ENCODE measurements at regions of chr1 and their contacts with region 1.

Region 1: GRCh38 chr1:83764209-83764608 is 234.7 kb downstream of the TTLL7 start:
- H3K4me3 ChIP-seq: no peak overlapping the region
- H3K27ac ChIP-seq: no peak overlapping the region
- H3K4me1 ChIP-seq: peaks cover 15% of the 10 kb centered on the region; the same call in 1 of the 2 replicates
- CTCF ChIP-seq: no peak

Region 2: DNA sequence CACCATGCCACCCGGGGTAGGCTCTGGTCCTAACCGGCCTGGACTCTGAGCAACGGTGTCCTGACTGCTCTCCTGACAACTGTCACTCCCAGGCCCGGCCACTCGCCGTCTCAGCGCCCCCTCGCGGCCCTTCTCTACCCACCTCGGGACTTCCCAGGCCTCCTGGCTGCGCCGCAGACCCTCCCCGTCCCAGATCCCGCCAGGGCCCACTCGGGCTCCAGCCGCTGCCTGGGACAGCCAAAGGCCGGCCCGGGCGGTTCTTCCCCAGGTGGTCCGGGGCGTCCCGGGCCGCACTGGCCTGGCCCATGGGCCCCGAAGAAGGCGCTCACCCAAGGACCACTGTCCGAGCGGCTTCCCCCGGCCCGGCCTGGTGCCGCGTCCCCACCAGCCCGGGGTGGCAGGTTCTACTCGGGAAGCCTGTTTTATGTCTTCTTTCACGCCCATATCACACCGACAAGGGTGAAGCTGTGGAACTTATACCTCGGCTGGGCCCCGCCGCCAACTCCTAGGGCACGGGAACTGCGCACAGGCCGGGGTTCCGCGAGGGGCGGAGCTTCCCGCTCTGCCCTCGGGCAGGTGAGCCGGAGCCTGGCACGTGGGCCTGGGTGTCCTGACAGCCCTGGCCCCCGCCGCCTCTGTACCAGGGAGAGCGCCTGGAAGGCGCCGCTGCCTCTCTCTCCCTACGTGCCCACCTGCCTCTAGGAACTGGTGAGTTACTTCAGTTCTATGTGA is 96.4 kb after region 1 on chr1:
- CTCF ChIA-PET with region 1: no interaction called
- POLR2A ChIA-PET with region 1: no interaction called
- H3K4me3 ChIP-seq: peak overlapping the region; percentile 44
- H3K27ac ChIP-seq: peak overlapping the region; percentile 93
- H3K4me1 ChIP-seq: no peaks in the 10 kb centered on the region
- CTCF ChIP-seq: no peak; the same call in 1 of the 2 replicates

Region 3: DNA sequence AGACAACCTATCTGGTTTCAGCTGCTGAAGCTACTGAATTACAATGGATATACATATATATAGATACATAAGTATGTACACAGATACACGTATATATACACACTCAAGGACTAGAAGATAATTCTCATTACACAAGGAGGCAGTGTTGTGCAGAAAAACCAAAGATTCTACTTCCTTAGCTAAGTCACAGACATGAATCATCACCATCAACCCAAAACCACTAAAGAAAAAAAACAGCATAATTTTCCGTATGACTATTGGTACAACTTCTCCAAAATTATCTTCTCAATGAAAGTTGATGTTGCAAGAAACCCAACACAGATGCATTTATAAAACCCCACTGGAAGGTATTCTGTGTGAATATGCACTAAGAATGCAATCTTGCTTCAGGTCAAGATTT is 678.0 kb after region 1 on chr1:
- CTCF ChIA-PET with region 1: interaction called, 10 read pairs
- POLR2A ChIA-PET with region 1: no interaction called
- H3K4me3 ChIP-seq: no peak overlapping the region
- H3K27ac ChIP-seq: no peak overlapping the region
- H3K4me1 ChIP-seq: no peaks in the 10 kb centered on the region
- CTCF ChIP-seq: no peak

Measured in HEK293 (cell line).